ENCODE measurements at regions of chr7 and their contacts with region 1.

Region 1: GRCh38 chr7:30740424-30741181 is 11.3 kb upstream of the INMT start:
- DNase-seq: peak; percentile 59 to 88 (median 75)
- ATAC-seq: peak; percentile 22 to 80 (median 70)
- H3K4me3 ChIP-seq: no peak overlapping the region
- H3K27ac ChIP-seq: no peak overlapping the region
- H3K4me1 ChIP-seq: peaks cover 0 to 12% (median 5%) of the 10 kb centered on the region in 12 donors
- H3K27me3 ChIP-seq: no peaks in the 10 kb centered on the region
- CTCF ChIP-seq: peak; percentile 95 to 100 (median 99)
- POLR2A ChIP-seq: no peak

Region 2: GRCh38 chr7:30659312-30659711 is 81.3 kb before region 1 on chr7:
- intact Hi-C with region 1: no loop called
- DNase-seq: no peak
- ATAC-seq: no peak
- H3K4me3 ChIP-seq: no peak overlapping the region
- H3K27ac ChIP-seq: no peak overlapping the region
- H3K4me1 ChIP-seq: no peaks in the 10 kb centered on the region
- H3K27me3 ChIP-seq: no peaks in the 10 kb centered on the region
- CTCF ChIP-seq: no peak
- POLR2A ChIP-seq: no peak

Region 3: DNA sequence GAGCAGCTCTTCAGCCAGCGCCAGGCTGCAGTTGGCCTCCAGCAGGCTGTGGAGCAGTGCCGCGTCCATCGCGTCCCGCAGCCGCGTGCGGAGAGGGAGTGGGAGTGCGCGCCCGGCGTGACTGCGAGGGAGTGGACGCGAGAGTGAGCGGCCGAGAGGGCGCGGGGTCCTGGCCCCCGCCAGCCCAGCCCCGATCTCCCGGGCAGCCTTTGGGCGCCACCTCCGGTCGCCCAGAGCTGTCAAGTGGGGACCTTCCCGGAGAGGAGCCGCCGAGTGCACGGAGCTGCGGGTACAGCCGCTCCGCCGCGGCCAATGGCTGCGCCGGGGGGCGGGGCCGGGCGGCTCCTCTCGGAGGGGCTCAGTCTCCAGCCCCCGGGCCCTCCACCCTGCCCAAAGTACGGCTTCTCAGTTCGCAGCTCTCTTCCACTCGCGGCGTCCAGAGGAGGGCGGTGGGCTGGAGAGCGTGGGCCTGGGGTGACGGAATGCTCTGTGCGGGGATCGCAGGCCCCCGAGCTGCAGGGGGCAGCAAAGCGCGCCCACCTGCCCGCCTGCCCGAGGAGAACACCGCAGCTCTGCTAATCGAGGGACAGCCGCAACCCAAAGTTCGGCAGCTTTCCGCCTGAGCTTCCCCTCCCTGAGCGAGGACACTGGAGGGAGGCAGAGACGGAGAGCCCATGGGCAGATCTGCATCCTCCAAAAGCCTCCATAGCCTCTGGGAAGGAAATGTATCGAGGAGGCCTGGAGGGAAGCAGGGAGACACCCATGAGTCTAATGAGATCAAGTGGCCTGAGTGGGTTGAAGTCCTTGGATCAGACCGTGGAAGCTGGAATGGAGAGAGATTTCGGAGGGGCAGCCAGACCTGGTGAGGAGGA is 58.2 kb before region 1 on chr7 and contains the start of gene CRHR2:
- intact Hi-C with region 1: loop called (anchors 1 to 5 kb)
- DNase-seq: peak in 3 of 5 donors; percentile 33 to 65 (median 36)
- ATAC-seq: peak; percentile 27 to 83 (median 66)
- H3K4me3 ChIP-seq: peak within 1 kb of the TSS; percentile 27 to 67 (median 56)
- H3K27ac ChIP-seq: peak within 1 kb of the TSS in 2 of 12 donors; percentile 34 to 53
- H3K4me1 ChIP-seq: peaks cover 4 to 22% (median 12%) of the 10 kb centered on the region in 12 donors
- H3K27me3 ChIP-seq: peaks cover 13 to 53% (median 32%) of the 10 kb centered on the region in 9 donors
- CTCF ChIP-seq: peak; percentile 33 to 71 (median 56)
- POLR2A ChIP-seq: no peak
- total RNA-seq, gene CRHR2: 0.28 to 1.6 (median 0.71) TPM in 8 of 9 donors, not detected in the other

Region 4: GRCh38 chr7:30702200-30702599 is 38.4 kb before region 1 on chr7:
- intact Hi-C with region 1: loop called in 2 of 10 experiments (anchors 5 kb)
- DNase-seq: no peak
- ATAC-seq: no peak
- H3K4me3 ChIP-seq: no peak overlapping the region
- H3K27ac ChIP-seq: no peak overlapping the region
- H3K4me1 ChIP-seq: peaks cover 0 to 28% (median 7%) of the 10 kb centered on the region in 12 donors
- H3K27me3 ChIP-seq: no peaks in the 10 kb centered on the region
- CTCF ChIP-seq: peak in 1 of 12 donors; percentile 9
- POLR2A ChIP-seq: no peak

Region 5: GRCh38 chr7:30789334-30789711 is 48.7 kb after region 1 on chr7:
- intact Hi-C with region 1: loop called in 6 of 10 experiments (anchors 2 to 5 kb)
- DNase-seq: peak in 1 of 5 donors; percentile 56
- ATAC-seq: peak; percentile 62 to 96 (median 86)
- H3K4me3 ChIP-seq: no peak overlapping the region
- H3K27ac ChIP-seq: peak overlapping the region in 4 of 12 donors; percentile 25 to 59 (median 42)
- H3K4me1 ChIP-seq: peaks cover 0 to 15% (median 0%) of the 10 kb centered on the region in 12 donors
- H3K27me3 ChIP-seq: no peaks in the 10 kb centered on the region
- CTCF ChIP-seq: no peak
- POLR2A ChIP-seq: no peak

Region 6: DNA sequence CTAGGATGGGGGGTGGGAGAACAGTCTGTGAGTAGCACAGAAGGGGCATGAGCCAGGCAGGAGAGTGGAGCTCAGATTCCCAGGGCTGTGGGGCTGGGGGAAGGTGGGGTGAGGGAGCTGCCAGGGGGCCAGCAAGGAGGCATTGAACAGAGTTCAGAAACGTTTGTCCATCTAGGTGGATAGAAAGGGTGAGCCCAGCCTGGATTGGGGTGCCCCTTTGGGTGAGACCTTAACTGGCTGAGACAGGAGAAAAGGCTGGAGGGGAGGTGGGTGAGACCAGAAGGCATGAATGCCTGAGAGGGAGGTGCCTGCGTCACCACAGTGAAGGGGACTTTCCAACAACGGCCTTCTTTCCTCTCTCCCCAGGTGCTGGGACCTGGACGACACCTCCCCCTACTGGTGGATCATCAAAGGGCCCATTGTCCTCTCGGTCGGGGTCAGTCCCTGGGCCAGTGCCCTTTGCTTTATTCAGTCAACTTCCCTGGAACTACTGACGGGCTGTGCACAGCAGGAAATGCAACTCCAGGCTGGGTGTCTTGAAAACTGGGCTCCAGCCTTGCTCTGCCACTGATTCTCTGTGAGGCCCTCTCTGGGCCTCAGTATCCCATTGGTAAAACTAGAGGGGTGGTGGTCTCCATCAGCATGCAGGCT is 234.1 kb after region 1 on chr7:
- intact Hi-C with region 1: loop called in 8 of 10 experiments (anchors 2 to 5 kb)
- DNase-seq: peak in 3 of 5 donors; percentile 56 to 69 (median 60)
- ATAC-seq: peak; percentile 62 to 85 (median 78)
- H3K4me3 ChIP-seq: no peak overlapping the region
- H3K27ac ChIP-seq: no peak overlapping the region
- H3K4me1 ChIP-seq: peaks cover 0 to 19% (median 1%) of the 10 kb centered on the region in 12 donors
- H3K27me3 ChIP-seq: peaks cover 0 to 4% (median 0%) of the 10 kb centered on the region in 9 donors
- CTCF ChIP-seq: peak; percentile 68 to 85 (median 78)
- POLR2A ChIP-seq: no peak

Measured in heart left ventricle (tissue), 16 donors.